ENCODE measurements at regions of chr6 and their contacts with region 1.

Region 1: GRCh38 chr6:27126815-27127537 is 120.5 kb upstream of the PRSS16 start:
- DNase-seq: peak; percentile 94
- H3K4me3 ChIP-seq: peak overlapping the region in 7 of 8 donors; percentile 11 to 57 (median 24)
- H3K27ac ChIP-seq: peak overlapping the region; percentile 30 to 85 (median 77)
- H3K4me1 ChIP-seq: peaks cover 0 to 39% (median 22%) of the 10 kb centered on the region in 6 donors
- H3K27me3 ChIP-seq: no peaks in the 10 kb centered on the region
- CTCF ChIP-seq: peak; percentile 72 to 92 (median 84)
- POLR2A ChIP-seq: no peak

Region 2: GRCh38 chr6:27078734-27079357 is 48.1 kb before region 1 on chr6:
- intact Hi-C with region 1: no loop called
- DNase-seq: no peak
- H3K4me3 ChIP-seq: peak overlapping the region in 7 of 8 donors; percentile 4 to 64 (median 25)
- H3K27ac ChIP-seq: no peak overlapping the region
- H3K4me1 ChIP-seq: peaks cover 0 to 7% (median 6%) of the 10 kb centered on the region in 6 donors
- H3K27me3 ChIP-seq: peaks cover 0 to 51% (median 0%) of the 10 kb centered on the region in 7 donors
- CTCF ChIP-seq: peak; percentile 45 to 80 (median 66)
- POLR2A ChIP-seq: no peak

Region 3: DNA sequence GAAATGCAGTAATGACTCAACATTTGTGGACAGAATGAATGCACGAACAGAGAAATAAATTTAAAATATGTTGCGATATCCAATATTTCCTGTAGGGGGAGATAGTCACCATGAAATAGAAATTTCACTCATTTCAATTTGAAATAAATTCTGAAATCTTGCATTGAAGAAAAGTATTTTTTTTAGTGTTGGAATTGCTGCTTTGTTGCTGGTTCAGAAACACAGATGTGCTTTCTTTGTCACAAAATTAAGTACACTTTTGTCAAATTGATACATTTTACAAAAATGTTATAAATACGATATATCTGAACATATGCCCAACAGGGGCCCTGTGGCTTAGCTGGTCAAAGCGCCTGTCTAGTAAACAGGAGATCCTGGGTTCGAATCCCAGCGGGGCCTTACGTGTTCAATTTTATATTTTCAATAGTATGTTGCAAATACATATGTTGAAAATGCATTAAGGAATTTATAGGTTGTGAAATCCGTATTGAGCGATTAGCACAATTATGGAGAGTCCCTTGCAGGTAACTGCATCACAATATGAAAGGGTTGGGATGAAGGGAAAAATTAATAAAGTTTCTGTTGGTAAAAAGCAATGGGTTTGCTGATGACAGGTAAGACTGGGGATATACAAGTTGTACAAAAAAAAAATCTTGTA is 35.1 kb after region 1 on chr6:
- intact Hi-C with region 1: loop called (anchors 5 kb)
- DNase-seq: no peak
- H3K4me3 ChIP-seq: no peak overlapping the region
- H3K27ac ChIP-seq: no peak overlapping the region
- H3K4me1 ChIP-seq: peaks cover 0 to 23% (median 8%) of the 10 kb centered on the region in 6 donors
- H3K27me3 ChIP-seq: no peaks in the 10 kb centered on the region
- CTCF ChIP-seq: peak; percentile 35 to 79 (median 68)
- POLR2A ChIP-seq: no peak

Region 4: GRCh38 chr6:27545271-27546046 is 418.5 kb after region 1 on chr6:
- intact Hi-C with region 1: no loop called
- DNase-seq: no peak
- H3K4me3 ChIP-seq: peak overlapping the region in 2 of 8 donors; percentile 7 to 16
- H3K27ac ChIP-seq: no peak overlapping the region
- H3K4me1 ChIP-seq: peaks cover 0 to 12% (median 5%) of the 10 kb centered on the region in 6 donors
- H3K27me3 ChIP-seq: peaks cover 5 to 100% (median 85%) of the 10 kb centered on the region in 7 donors
- CTCF ChIP-seq: no peak
- POLR2A ChIP-seq: no peak

Measured in spleen (tissue), 13 donors.